ENCODE measurements at regions of chr12 and their contacts with region 1.

Region 1: GRCh38 chr12:53054112-53054833 is 4.4 kb downstream of the TNS2 start:
- DNase-seq: peak; percentile 96
- H3K4me3 ChIP-seq: peak overlapping the region; percentile 46 to 70 (median 57)
- H3K27ac ChIP-seq: peak overlapping the region; percentile 43
- H3K4me1 ChIP-seq: peaks cover 48% of the 10 kb centered on the region
- H3K27me3 ChIP-seq: no peaks in the 10 kb centered on the region
- CTCF ChIP-seq: no peak

Region 2: GRCh38 chr12:53005986-53006809 is 48.1 kb before region 1 on chr12 and contains the start of gene EIF4B:
- CTCF ChIA-PET with region 1: interaction called, 28 read pairs
- dilution Hi-C with region 1: no loop called
- in situ Hi-C with region 1: no loop called
- intact Hi-C with region 1: no loop called
- DNase-seq: peak; percentile 99
- H3K4me3 ChIP-seq: peak within 1 kb of the TSS; percentile 75 to 86 (median 86)
- H3K27ac ChIP-seq: peak within 1 kb of the TSS; percentile 90
- H3K4me1 ChIP-seq: peaks cover 21% of the 10 kb centered on the region
- H3K27me3 ChIP-seq: no peaks in the 10 kb centered on the region
- CTCF ChIP-seq: no peak
- total RNA-seq, gene EIF4B: 350 to 850 TPM

Region 3: DNA sequence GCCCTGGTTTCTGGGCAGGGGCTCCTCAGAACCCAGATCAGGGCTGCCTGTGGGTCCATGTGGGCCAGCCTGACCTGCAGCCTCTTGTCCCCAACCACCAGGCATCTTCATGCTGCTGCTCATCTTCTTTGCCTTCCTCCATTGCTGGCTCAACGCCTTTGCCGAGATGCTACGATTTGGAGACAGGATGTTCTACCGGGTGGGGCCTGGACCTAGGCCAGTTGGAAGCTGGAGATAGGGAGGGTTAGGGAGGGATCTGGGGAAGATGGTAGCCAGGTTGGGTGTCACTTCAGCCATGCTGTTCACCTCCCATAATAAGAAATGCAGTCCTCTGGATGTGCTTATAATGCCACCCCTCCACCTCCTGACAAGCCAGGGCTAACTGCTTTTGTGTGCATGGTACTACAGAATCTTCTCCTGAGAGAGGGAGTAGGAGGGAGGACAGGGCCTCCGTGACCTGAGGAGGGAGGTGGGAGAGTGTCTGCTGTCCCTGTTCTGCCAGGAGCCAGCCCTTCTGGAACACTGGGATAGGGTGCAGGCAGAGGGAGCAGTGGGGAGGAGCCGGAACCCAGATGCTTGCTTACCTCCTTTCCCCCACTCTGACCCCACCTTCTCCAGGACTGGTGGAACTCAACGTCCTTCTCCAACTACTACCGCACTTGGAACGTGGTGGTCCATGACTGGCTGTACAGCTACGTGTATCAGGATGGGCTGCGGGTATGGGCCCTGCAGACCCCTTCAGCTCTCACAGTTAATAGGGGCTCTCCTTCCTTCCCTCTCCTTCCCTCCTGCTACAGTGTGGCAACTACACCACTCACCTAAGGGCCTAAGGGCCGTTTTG is 66.6 kb after region 1 on chr12:
- CTCF ChIA-PET with region 1: interaction called, 24 read pairs
- dilution Hi-C with region 1: no loop called
- in situ Hi-C with region 1: no loop called
- intact Hi-C with region 1: no loop called
- DNase-seq: no peak
- H3K4me3 ChIP-seq: no peak overlapping the region
- H3K27ac ChIP-seq: no peak overlapping the region
- H3K4me1 ChIP-seq: no peaks in the 10 kb centered on the region
- H3K27me3 ChIP-seq: no peaks in the 10 kb centered on the region
- CTCF ChIP-seq: no peak

Region 4: GRCh38 chr12:53295070-53295890 is 241.0 kb after region 1 on chr12 and contains the start of gene PFDN5:
- CTCF ChIA-PET with region 1: no interaction called
- dilution Hi-C with region 1: no loop called
- in situ Hi-C with region 1: loop called in 1 of 2 experiments (anchors 25 kb)
- intact Hi-C with region 1: no loop called
- DNase-seq: peak; percentile 83
- H3K4me3 ChIP-seq: peak within 1 kb of the TSS; percentile 33 to 68 (median 58)
- H3K27ac ChIP-seq: peak within 1 kb of the TSS; percentile 58
- H3K4me1 ChIP-seq: peaks cover 25% of the 10 kb centered on the region
- H3K27me3 ChIP-seq: no peaks in the 10 kb centered on the region
- CTCF ChIP-seq: no peak
- total RNA-seq, gene PFDN5: 162 to 187 TPM

Measured in mammary epithelial cell (primary cell).